Heart right ventricle (tissue), 16 donors: ENCODE measurements at regions of chr9 and their contacts with region 1.

Region 1: GRCh38 chr9:35732122-35732799 is at the starts of genes CREB3 and TLN1:
- DNase-seq: peak; percentile 97 to 98
- ATAC-seq: peak; percentile 87 to 94 (median 92)
- H3K4me3 ChIP-seq: peak within 1 kb of the TSS; percentile 65 to 98 (median 80)
- H3K27ac ChIP-seq: peak within 1 kb of the TSS; percentile 93 to 99 (median 98)
- H3K4me1 ChIP-seq: peaks cover 43 to 76% (median 56%) of the 10 kb centered on the region in 9 donors
- H3K27me3 ChIP-seq: no peaks in the 10 kb centered on the region
- CTCF ChIP-seq: peak in 3 of 9 donors; percentile 6 to 26 (median 13)
- total RNA-seq, gene CREB3: 16.2 to 29.5 (median 20.2) TPM
- total RNA-seq, gene TLN1: 206 to 323 (median 238) TPM

Region 2: DNA sequence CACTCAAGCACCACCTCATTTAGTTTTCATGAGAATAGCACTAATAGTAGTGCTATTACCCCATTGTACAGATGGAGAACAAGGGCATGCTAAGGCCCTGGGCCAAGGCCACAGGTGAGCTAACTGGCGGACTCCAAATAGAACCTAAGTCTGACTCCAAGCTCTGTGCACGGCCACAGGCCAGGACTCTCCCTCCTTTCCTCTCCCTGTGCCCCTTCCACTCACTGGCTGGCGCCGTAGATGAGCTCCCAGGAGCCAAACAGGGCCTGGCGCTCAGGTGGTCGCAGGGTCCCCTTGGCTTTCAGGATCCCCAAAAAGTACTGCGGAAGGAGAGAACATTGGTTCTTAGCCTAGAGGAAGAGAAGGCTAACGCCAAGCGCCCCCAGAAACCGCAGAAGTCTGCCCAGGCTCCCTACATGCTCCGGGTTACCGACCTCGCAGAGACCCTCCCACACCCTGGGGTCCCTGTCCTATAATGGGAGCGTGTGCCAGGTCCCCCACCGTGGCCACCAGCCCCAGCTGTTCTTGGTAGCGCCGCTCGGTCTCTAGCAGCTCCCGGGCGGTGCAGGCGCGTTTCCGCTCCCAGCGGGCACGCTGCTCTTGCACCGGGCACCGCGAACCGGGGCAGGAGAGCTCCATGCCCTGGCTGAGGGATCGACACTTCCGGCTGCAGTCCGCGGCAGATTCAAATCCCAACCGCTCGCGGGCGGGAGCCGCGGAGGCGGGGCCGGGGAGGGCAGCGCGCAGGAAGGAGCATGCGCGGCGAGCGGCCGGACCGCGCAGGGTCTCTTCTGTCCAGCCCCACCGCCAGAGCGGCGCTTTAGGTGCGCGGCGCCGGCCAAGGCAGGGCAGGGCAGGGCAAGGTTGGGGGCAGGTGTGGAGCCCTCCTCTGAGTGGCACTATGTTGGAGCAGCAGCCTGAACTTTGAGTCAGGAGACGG is 67.5 kb before region 1 on chr9 and contains the start of gene ARHGEF39:
- intact Hi-C with region 1: loop called in 5 of 10 experiments (anchors 2 to 10 kb)
- DNase-seq: peak; percentile 76 to 84
- ATAC-seq: peak; percentile 79 to 88 (median 85)
- H3K4me3 ChIP-seq: peak within 1 kb of the TSS in 9 of 10 donors; percentile 36 to 67 (median 58)
- H3K27ac ChIP-seq: peak within 1 kb of the TSS in 9 of 10 donors; percentile 31 to 78 (median 61)
- H3K4me1 ChIP-seq: peaks cover 0 to 50% (median 34%) of the 10 kb centered on the region in 9 donors
- H3K27me3 ChIP-seq: no peaks in the 10 kb centered on the region
- CTCF ChIP-seq: peak in 4 of 9 donors; percentile 12 to 44 (median 39)
- total RNA-seq, gene ARHGEF39: 0.09 to 0.85 (median 0.30) TPM in 8 of 10 donors, not detected in the others

Region 3: GRCh38 chr9:35696525-35697215 is 35.6 kb before region 1 on chr9:
- intact Hi-C with region 1: loop called in 6 of 10 experiments (anchors 2 to 5 kb)
- DNase-seq: peak; percentile 46 to 47
- ATAC-seq: peak; percentile 56 to 76 (median 69)
- H3K4me3 ChIP-seq: no peak overlapping the region
- H3K27ac ChIP-seq: peak overlapping the region in 2 of 10 donors; percentile 0 to 4
- H3K4me1 ChIP-seq: peaks cover 0 to 16% (median 6%) of the 10 kb centered on the region in 9 donors
- H3K27me3 ChIP-seq: no peaks in the 10 kb centered on the region
- CTCF ChIP-seq: peak; percentile 70 to 94 (median 91)

Region 4: DNA sequence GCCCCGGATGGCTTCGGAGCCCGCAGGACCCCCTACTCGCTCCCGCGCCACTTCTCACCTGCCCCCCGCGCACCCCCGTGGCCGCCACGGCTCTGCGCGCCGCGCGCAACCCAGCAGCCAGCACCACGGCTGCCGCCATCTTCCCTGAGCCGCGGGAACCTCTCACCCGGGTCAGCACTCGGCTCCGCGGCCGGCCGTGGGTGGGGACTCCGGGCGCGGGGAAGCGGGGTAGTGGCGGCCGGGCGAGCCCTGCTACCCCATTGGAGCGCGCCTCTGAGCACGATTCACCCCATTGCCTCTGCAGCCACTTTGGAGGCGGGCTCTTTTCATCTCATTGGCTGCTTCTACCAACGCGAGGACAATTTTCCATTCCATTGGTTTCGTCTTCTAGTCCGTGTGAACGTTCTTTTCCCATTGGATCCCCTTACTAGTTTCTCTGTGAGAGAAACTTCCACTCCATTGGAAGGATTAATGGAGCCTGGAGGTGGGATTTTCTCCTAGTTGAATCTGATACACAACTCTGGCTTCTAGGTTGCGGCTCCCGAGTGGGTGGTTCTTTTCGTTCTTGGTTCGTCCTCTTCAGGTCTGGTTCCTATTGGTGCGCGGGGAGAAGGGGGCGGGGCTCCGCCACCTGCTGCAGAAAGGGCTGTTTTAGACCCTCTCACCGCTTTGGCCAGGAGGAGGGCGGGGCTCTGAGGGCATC is 82.7 kb after region 1 on chr9 and contains the start of gene HINT2:
- intact Hi-C with region 1: loop called in 1 of 10 experiments (anchors 10 kb)
- DNase-seq: peak; percentile 94 to 97
- ATAC-seq: peak; percentile 92 to 96 (median 95)
- H3K4me3 ChIP-seq: peak within 1 kb of the TSS; percentile 81 to 99 (median 94)
- H3K27ac ChIP-seq: peak within 1 kb of the TSS; percentile 97 to 100 (median 99)
- H3K4me1 ChIP-seq: peaks cover 0 to 43% (median 35%) of the 10 kb centered on the region in 9 donors
- H3K27me3 ChIP-seq: no peaks in the 10 kb centered on the region
- CTCF ChIP-seq: no peak
- total RNA-seq, gene HINT2: 56.8 to 83.1 (median 76.7) TPM